ENCODE measurements at regions of chr1 and their contacts with region 1.

Region 1: DNA sequence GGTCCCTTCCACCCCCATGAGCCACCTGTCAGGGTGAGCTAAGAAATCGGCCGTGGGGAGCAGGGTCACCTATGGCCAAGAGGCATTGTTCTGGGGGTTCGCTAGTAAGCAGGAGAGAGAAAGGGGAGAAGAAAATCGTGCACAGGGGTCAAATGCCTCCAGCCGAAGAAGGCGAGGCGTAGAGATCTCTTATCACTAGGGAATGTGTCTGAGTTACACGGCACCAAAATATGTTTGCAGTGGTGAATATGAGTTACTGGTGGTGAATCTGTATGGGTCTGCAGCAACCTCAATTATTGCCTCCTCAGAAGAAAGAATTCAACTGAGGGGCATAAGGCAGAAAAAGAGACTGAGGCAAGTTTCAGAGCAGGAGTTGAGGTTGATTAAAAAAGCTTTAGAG is 54.2 kb upstream of the RABGAP1L start:
- DNase-seq: no peak
- H3K4me3 ChIP-seq: no peak overlapping the region
- H3K4me1 ChIP-seq: no peaks in the 10 kb centered on the region; the same call in 1 of the 2 replicates
- H3K27me3 ChIP-seq: peaks cover 29% of the 10 kb centered on the region

Region 2: GRCh38 chr1:174159252-174160108 is 54.4 kb after region 1 on chr1 and contains the start of gene RABGAP1L:
- in situ Hi-C with region 1: loop called (anchors 10 kb)
- DNase-seq: peak; percentile 92 to 97
- H3K4me3 ChIP-seq: peak within 1 kb of the TSS; percentile 98
- H3K4me1 ChIP-seq: peaks cover 5% of the 10 kb centered on the region; the same call in 1 of the 2 replicates
- H3K27me3 ChIP-seq: no peaks in the 10 kb centered on the region

Region 3: GRCh38 chr1:174314433-174314832 is 209.3 kb after region 1 on chr1:
- in situ Hi-C with region 1: no loop called
- DNase-seq: no peak
- H3K4me3 ChIP-seq: no peak overlapping the region
- H3K4me1 ChIP-seq: no peaks in the 10 kb centered on the region
- H3K27me3 ChIP-seq: no peaks in the 10 kb centered on the region

Measured in HAP-1 (cell line).